H1 (cell line): ENCODE measurements at regions of chr12 and their contacts with region 1.

Region 1: DNA sequence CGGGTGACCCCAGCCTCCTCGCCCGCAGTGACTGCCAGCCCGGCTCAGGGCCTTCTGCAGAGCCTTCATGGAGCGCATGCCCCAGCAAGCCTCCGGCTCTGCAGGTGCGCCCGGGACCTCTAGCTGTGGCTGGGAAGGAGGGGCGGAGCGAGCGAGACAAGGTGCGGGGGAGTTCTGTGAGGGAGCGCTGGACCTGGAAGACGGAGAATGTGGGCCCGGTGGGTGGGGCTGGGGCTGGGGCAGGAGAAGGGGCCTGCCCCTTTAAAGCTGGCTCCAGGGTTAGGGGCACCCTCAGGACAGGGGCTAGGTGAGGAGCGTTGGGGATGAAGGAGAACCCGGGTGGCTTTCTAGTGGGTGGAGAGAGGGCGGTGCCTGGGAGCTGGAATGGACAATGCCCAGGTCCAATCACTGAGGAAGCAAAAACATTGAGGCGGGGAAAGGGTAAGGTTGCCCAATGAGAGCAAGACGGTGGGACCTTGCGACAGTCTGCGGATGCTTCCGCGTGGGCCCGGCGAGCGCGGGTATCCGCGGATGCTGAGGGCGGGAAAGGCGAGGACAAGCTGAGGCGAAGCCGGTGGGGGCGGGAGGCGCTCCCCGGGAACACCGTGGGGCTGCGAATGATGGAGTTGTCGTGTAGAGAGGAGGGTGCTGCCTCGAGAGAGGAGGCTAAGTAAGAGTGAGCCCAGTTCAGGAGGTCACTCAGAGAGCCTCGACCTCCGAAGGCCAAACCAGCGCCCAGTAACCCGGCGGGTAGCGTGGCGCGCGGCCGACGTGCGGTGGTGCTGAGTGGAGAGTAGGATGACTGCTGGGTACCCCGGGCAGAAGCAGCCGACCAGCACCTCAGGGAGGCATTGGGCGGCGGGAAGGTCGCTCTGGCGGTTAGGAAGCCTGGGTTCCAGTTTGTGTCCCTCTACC is at the start of gene GLS2:
- DNase-seq: peak; percentile 39 to 89
- H3K4me3 ChIP-seq: peak within 1 kb of the TSS; percentile 65 to 92 (median 74)
- H3K27ac ChIP-seq: no peak within 1 kb of the TSS
- H3K4me1 ChIP-seq: peaks cover 2 to 5% (median 3%) of the 10 kb centered on the region in 4 experiments; a peak in 6 of 7 replicates
- H3K27me3 ChIP-seq: peaks cover 7 to 35% (median 32%) of the 10 kb centered on the region in 4 experiments
- CTCF ChIP-seq: no peak
- EP300 ChIP-seq: no peak
- POLR2A ChIP-seq: no peak
- RAD21 ChIP-seq: no peak
- total RNA-seq, gene GLS2: 14.5 and 16.9 TPM in 2 replicates

Region 2: DNA sequence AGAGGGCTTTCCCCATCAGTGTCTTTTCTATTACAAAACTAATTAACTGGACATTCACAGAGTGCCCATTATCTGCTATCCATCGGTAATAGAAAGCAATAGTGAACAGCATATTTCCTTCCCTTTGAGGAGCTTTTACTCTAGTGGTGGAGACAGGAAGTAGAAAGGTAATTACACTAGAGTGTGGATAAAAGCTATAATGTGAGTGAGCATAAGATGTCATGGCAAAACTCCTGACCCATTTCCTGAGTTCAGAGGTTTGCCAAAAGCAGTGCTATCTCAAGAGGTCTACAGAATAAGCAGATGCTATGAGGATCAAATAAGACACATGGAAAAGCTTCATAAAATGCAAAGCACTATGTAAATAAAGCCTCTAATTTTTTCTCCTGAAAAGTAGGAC is 63.1 kb before region 1 on chr12:
- CTCF ChIA-PET with region 1: no interaction called
- POLR2A ChIA-PET with region 1: no interaction called
- DNase-seq: no peak
- H3K4me3 ChIP-seq: no peak overlapping the region
- H3K27ac ChIP-seq: no peak overlapping the region
- H3K4me1 ChIP-seq: no peaks in the 10 kb centered on the region
- H3K27me3 ChIP-seq: no peaks in the 10 kb centered on the region
- CTCF ChIP-seq: no peak
- EP300 ChIP-seq: no peak
- POLR2A ChIP-seq: no peak
- RAD21 ChIP-seq: no peak

Region 3: GRCh38 chr12:56457817-56458216 is 30.5 kb before region 1 on chr12:
- CTCF ChIA-PET with region 1: no interaction called
- POLR2A ChIA-PET with region 1: no interaction called
- DNase-seq: no peak
- H3K4me3 ChIP-seq: no peak overlapping the region
- H3K27ac ChIP-seq: no peak overlapping the region
- H3K4me1 ChIP-seq: peaks cover 0 to 5% (median 3%) of the 10 kb centered on the region in 4 experiments; a peak in 4 of 7 replicates
- H3K27me3 ChIP-seq: no peaks in the 10 kb centered on the region
- CTCF ChIP-seq: no peak
- EP300 ChIP-seq: no peak
- POLR2A ChIP-seq: no peak
- RAD21 ChIP-seq: no peak

Region 4: GRCh38 chr12:56468216-56469006 is 19.9 kb before region 1 on chr12 and contains the start of gene SPRYD4:
- CTCF ChIA-PET with region 1: interaction called, 5 read pairs
- POLR2A ChIA-PET with region 1: interaction called, 15 read pairs
- DNase-seq: peak; percentile 59 to 90
- H3K4me3 ChIP-seq: peak within 1 kb of the TSS; percentile 80 to 99 (median 87)
- H3K27ac ChIP-seq: peak within 1 kb of the TSS; percentile 90
- H3K4me1 ChIP-seq: peaks cover 3 to 6% (median 5%) of the 10 kb centered on the region in 4 experiments
- H3K27me3 ChIP-seq: no peaks in the 10 kb centered on the region
- CTCF ChIP-seq: peak; percentile 19 to 34 (median 21); a peak in 3 of 4 replicates
- EP300 ChIP-seq: 0 out of 3 replicates have a peak, but pooled peaks of 1 of the 2 experiments have one; percentile 13
- POLR2A ChIP-seq: peak; percentile 98
- RAD21 ChIP-seq: no peak; a peak in 1 of 4 replicates
- total RNA-seq, gene SPRYD4: 4.0 and 4.3 TPM in 2 replicates